ENCODE measurements at regions of chr10 and their contacts with region 1.

Region 1: DNA sequence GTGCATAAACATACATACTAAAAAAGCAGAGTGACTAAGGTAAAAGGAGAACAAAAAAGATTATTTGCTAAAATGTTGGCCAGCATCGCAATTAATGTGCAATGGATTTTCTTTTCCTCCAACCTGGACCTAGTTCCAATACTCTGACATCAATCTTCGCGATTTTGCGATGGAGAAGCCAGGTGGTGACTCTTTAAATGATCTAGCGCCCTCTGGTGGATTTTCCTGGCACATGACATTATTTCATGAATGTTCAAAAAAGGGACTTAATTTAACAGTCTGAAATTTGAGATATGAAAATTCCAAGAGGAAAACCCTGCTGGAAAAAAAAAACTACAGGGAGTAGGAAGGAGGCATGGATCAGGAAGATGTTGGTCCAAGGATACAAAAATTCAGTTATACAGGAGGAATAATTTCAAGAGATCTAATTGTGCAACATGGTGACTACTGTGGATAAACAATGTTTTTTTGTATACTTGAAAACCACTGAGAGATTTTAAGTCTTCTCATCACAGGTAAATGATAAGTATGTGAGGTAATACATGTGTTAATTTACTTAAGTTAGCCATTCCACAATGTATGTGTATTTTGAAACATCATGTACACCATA is 4.3 kb upstream of the KCNMA1 start:
- DNase-seq: peak; percentile 75 to 78
- ATAC-seq: peak in 1 of 2 experiments; percentile 52; a peak in 3 of 6 replicates
- H3K4me3 ChIP-seq: no peak overlapping the region
- H3K27ac ChIP-seq: peak overlapping the region in 1 of 2 experiments; percentile 66; a peak in 2 of 6 replicates
- H3K4me1 ChIP-seq: peaks cover 10% of the 10 kb centered on the region; the same call in 2 of the 3 replicates
- CTCF ChIP-seq: peak; percentile 94
- EP300 ChIP-seq: no peak
- POLR2A ChIP-seq: no peak
- RAD21 ChIP-seq: peak; percentile 96 to 97

Region 2: GRCh38 chr10:77173615-77174461 is 468.1 kb before region 1 on chr10:
- CTCF ChIA-PET with region 1: interaction called, 627 read pairs
- POLR2A ChIA-PET with region 1: no interaction called
- DNase-seq: peak; percentile 77 to 80
- ATAC-seq: peak; percentile 90 to 95
- H3K4me3 ChIP-seq: no peak overlapping the region
- H3K27ac ChIP-seq: peak overlapping the region in 1 of 2 experiments; percentile 52; a peak in 2 of 6 replicates
- H3K4me1 ChIP-seq: peaks cover 8% of the 10 kb centered on the region
- CTCF ChIP-seq: peak; percentile 97
- EP300 ChIP-seq: no peak
- POLR2A ChIP-seq: no peak
- RAD21 ChIP-seq: peak; percentile 96

Region 3: GRCh38 chr10:77456414-77456813 is 185.5 kb before region 1 on chr10:
- CTCF ChIA-PET with region 1: interaction called, 13 read pairs
- POLR2A ChIA-PET with region 1: no interaction called
- DNase-seq: no peak
- ATAC-seq: peak in 1 of 2 experiments; percentile 59; a peak in 3 of 6 replicates
- H3K4me3 ChIP-seq: no peak overlapping the region
- H3K27ac ChIP-seq: no peak overlapping the region
- H3K4me1 ChIP-seq: peaks cover 19% of the 10 kb centered on the region; the same call in 2 of the 3 replicates
- CTCF ChIP-seq: no peak
- EP300 ChIP-seq: no peak
- POLR2A ChIP-seq: no peak
- RAD21 ChIP-seq: peak in 1 of 2 experiments; percentile 27; a peak in 1 of 5 replicates

Region 4: GRCh38 chr10:77504873-77505257 is 137.0 kb before region 1 on chr10:
- CTCF ChIA-PET with region 1: interaction called, 11 read pairs
- POLR2A ChIA-PET with region 1: interaction called, 3 read pairs
- DNase-seq: peak; percentile 49 to 59
- ATAC-seq: peak; percentile 49 to 69; a peak in 5 of 6 replicates
- H3K4me3 ChIP-seq: no peak overlapping the region
- H3K27ac ChIP-seq: peak overlapping the region; percentile 69 to 84
- H3K4me1 ChIP-seq: peaks cover 65% of the 10 kb centered on the region
- CTCF ChIP-seq: peak; percentile 22; the same call in 2 of the 3 replicates
- EP300 ChIP-seq: peak in 1 of 2 experiments; percentile 23; a peak in 1 of 5 replicates
- POLR2A ChIP-seq: no peak
- RAD21 ChIP-seq: peak in 1 of 2 experiments; percentile 36; a peak in 3 of 5 replicates

Region 5: DNA sequence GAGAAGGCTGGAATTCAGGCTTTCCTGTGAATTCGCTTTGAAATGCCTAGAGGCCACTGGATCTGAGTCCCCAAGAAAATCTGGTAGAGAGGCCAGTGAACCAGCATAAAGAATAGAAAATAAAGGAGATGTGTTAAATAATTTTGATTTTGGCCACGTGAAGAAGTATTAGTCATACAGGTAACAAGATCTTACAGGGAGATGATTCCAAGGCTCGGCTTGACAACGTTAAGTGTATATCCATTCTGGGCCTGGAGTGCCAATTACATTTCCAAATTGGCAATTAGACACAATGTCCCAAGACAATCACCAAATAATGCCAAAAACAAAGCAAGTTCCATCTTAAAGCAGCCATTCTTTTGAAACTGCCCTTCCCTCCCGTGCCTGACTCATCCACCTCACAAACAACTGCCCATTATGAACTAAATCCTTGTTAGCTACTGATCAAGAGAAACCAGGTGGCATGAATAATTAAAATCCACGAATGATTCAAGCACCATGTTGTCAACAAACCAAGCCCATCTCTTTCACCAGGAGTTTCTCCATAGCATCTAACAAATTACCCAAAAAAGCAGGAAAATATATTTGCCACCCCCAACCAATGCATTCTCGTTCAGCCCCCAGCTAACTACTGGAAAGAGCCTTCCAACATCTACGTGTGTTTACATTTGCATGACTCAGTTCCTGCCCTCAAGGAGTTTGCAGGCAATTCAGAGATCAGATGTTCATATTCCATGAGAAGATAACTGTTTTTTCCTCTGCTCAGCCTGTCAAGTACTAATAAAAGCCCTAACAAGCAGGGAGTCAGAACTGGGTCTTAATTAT is 12.8 kb before region 1 on chr10:
- CTCF ChIA-PET with region 1: interaction called, 47 read pairs
- POLR2A ChIA-PET with region 1: no interaction called
- DNase-seq: peak in 1 of 2 experiments; percentile 65
- ATAC-seq: peak; percentile 66 to 71; a peak in 5 of 6 replicates
- H3K4me3 ChIP-seq: 0 out of 3 replicates have a peak overlapping the region, but pooled peaks have one; percentile 0
- H3K27ac ChIP-seq: peak overlapping the region; percentile 29 to 83; a peak in 5 of 6 replicates
- H3K4me1 ChIP-seq: peaks cover 31% of the 10 kb centered on the region
- CTCF ChIP-seq: no peak
- EP300 ChIP-seq: peak in 1 of 2 experiments; percentile 25; a peak in 1 of 5 replicates
- POLR2A ChIP-seq: no peak
- RAD21 ChIP-seq: no peak

Region 6: DNA sequence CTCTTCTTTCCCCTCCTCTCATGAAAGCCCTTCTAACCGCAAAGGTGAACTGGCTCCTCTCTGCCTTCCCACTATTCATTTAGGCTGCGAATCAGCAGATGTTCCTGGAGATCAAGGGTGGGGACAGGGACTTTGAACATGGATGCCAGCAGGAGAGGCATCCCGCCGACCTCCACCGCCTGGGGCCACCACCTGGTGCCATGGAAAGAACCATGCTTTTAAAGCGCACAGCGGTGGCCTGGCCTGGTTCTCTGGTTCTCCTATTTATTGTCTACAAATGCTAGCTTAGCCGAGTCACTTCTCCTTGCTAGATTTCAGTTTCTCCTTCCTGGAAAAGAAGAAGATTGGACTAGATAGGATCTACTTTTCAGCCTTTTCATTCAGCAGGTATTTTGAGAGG is 38.9 kb after region 1 on chr10:
- CTCF ChIA-PET with region 1: no interaction called
- POLR2A ChIA-PET with region 1: no interaction called
- DNase-seq: no peak
- ATAC-seq: no peak
- H3K4me3 ChIP-seq: no peak overlapping the region
- H3K27ac ChIP-seq: no peak overlapping the region
- H3K4me1 ChIP-seq: peaks cover 10% of the 10 kb centered on the region; the same call in 1 of the 3 replicates
- CTCF ChIP-seq: no peak
- EP300 ChIP-seq: no peak
- POLR2A ChIP-seq: no peak
- RAD21 ChIP-seq: no peak